Naive thymus-derived CD8-positive, alpha-beta T cell (primary cell): ENCODE measurements at regions of chr9 and their contacts with region 1.

Region 1: GRCh38 chr9:129944506-129945116 is 98.4 kb downstream of the FNBP1 start:
- DNase-seq: peak in 9 of 10 donors; percentile 24 to 77 (median 61)
- ATAC-seq: peak; percentile 86 to 93
- H3K4me3 Mint-ChIP-seq: peak overlapping the region in 9 of 10 donors; percentile 26 to 75 (median 61)
- H3K27ac Mint-ChIP-seq: peak overlapping the region; percentile 75 to 94 (median 91)
- H3K4me1 Mint-ChIP-seq: peaks cover 23 to 64% (median 57%) of the 10 kb centered on the region in 4 donors
- H3K27me3 Mint-ChIP-seq: no peaks in the 10 kb centered on the region

Region 2: DNA sequence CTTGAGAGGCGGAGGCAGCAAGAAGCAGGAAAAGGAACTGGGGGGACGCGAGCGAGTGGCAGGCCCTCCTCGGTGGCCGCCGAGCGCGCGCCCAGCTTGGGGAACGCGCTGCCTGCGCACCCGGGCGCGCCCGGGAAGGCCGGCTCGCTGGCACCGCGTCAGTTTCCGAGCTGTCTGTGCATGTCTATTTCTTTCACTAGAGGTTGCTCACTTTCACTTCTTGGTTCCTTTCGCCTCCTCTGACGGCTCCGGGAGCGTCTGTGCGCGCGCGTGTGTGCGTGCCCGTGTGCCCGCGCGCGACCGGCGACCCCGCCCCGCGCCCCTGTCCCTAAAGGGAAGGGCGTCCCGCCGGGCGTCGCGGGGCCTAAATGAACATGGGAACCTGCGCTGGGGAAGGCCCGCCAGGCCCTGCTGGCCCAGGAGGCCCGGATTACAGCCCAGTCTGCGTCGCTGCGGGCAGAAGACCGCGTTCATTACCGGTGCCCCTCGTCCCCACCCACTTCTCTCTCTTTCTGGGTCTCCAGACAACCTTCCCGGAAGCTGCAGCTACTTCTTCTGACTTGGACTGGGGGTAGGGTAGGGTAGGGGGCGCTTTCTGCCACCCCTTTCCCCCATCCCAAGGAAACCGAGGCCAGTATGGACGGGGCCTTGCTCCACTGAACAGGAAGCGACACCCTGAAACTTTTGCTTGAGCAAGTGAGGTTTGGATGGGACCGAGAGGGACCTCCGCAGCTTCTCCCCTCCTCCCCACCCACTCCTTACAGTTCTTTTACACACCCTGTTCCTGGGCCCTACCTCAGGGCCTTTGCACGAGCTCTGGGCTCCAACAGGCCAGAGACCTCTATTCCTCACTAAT is 560.8 kb before region 1 on chr9:
- POLR2A ChIA-PET with region 1: no interaction called
- DNase-seq: peak; percentile 67 to 89 (median 78)
- ATAC-seq: peak; percentile 89 to 91
- H3K4me3 Mint-ChIP-seq: peak overlapping the region; percentile 76 to 89 (median 82)
- H3K27ac Mint-ChIP-seq: peak overlapping the region; percentile 90 to 99 (median 97)
- H3K4me1 Mint-ChIP-seq: peaks cover 9 to 23% (median 17%) of the 10 kb centered on the region in 4 donors
- H3K27me3 Mint-ChIP-seq: no peaks in the 10 kb centered on the region

Region 3: DNA sequence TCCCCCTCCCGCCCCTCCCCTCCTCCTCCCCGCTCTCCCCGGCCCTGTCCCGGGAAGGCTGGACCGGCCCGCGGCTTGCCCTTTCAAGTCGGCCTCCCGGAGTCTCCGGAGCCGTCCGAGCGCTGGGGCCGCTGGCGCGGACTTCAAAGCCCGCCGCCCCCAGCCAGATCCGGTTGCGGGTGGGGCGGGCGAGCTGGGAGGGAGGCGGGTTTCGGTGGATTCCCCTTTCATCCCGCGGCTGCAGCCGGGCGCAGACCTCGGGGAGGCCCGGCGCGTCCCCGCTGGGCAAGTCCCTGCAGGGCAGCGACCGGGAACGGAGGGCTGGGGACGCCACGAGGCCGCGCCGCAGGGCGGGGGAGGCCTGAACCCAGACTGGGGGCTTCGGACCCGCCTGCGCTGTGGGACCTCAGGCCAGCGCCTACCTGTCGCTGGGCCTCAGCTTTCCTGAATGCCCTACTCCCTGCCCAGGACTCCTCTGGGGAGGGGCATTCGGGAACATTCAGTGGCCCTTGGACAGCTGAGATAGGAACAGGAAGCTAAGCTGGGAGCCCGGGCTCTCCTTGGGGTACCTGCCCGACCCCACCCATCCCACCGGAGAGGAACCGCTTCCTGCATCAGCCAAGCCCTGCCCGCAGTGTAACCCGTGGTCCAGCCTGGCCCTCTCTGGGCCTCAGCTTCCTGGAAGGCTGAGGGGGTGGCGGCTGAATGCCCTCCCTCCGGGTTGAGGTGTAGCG is 347.1 kb before region 1 on chr9:
- POLR2A ChIA-PET with region 1: no interaction called
- DNase-seq: peak in 2 of 10 donors; percentile 31 to 38
- ATAC-seq: peak; percentile 65 to 75
- H3K4me3 Mint-ChIP-seq: peak overlapping the region; percentile 60 to 76 (median 68)
- H3K27ac Mint-ChIP-seq: peak overlapping the region in 6 of 10 donors; percentile 19 to 92 (median 62)
- H3K4me1 Mint-ChIP-seq: peaks cover 17 to 32% (median 25%) of the 10 kb centered on the region in 4 donors
- H3K27me3 Mint-ChIP-seq: peaks cover 0 to 13% (median 0%) of the 10 kb centered on the region in 5 donors

Region 4: GRCh38 chr9:129669141-129669718 is 275.4 kb before region 1 on chr9:
- POLR2A ChIA-PET with region 1: no interaction called
- DNase-seq: no peak
- ATAC-seq: no peak
- H3K4me3 Mint-ChIP-seq: no peak overlapping the region
- H3K27ac Mint-ChIP-seq: peak overlapping the region in 1 of 10 donors; percentile 40
- H3K4me1 Mint-ChIP-seq: peaks cover 3 to 9% (median 4%) of the 10 kb centered on the region in 4 donors
- H3K27me3 Mint-ChIP-seq: peaks cover 2 to 24% (median 9%) of the 10 kb centered on the region in 5 donors

Region 5: GRCh38 chr9:129889941-129890717 is 54.5 kb before region 1 on chr9:
- POLR2A ChIA-PET with region 1: interaction called, 12 read pairs
- DNase-seq: peak in 9 of 10 donors; percentile 41 to 80 (median 57)
- ATAC-seq: no peak
- H3K4me3 Mint-ChIP-seq: peak overlapping the region; percentile 86 to 98 (median 93)
- H3K27ac Mint-ChIP-seq: peak overlapping the region; percentile 97 to 100 (median 99)
- H3K4me1 Mint-ChIP-seq: peaks cover 49 to 97% (median 83%) of the 10 kb centered on the region in 4 donors
- H3K27me3 Mint-ChIP-seq: peaks cover 0 to 3% (median 0%) of the 10 kb centered on the region in 5 donors

Region 6: GRCh38 chr9:129972816-129973215 is 28.2 kb after region 1 on chr9:
- POLR2A ChIA-PET with region 1: no interaction called
- DNase-seq: no peak
- ATAC-seq: no peak
- H3K4me3 Mint-ChIP-seq: no peak overlapping the region
- H3K27ac Mint-ChIP-seq: peak overlapping the region in 7 of 10 donors; percentile 14 to 84 (median 51)
- H3K4me1 Mint-ChIP-seq: peaks cover 2 to 35% (median 16%) of the 10 kb centered on the region in 4 donors
- H3K27me3 Mint-ChIP-seq: no peaks in the 10 kb centered on the region